ENCODE measurements at regions of chr2 and their contacts with region 1.

Region 1: GRCh38 chr2:61962095-61962984 is 56.9 kb downstream of the COMMD1 start:
- DNase-seq: peak; percentile 80
- ATAC-seq: peak; percentile 97
- H3K4me3 ChIP-seq: no peak overlapping the region
- H3K27ac ChIP-seq: peak overlapping the region; percentile 79; the same call in 1 of the 2 replicates
- H3K4me1 ChIP-seq: peaks cover 3% of the 10 kb centered on the region
- H3K27me3 ChIP-seq: no peaks in the 10 kb centered on the region
- CTCF ChIP-seq: no peak
- POLR2A ChIP-seq: no peak
- RAD21 ChIP-seq: no peak

Region 2: DNA sequence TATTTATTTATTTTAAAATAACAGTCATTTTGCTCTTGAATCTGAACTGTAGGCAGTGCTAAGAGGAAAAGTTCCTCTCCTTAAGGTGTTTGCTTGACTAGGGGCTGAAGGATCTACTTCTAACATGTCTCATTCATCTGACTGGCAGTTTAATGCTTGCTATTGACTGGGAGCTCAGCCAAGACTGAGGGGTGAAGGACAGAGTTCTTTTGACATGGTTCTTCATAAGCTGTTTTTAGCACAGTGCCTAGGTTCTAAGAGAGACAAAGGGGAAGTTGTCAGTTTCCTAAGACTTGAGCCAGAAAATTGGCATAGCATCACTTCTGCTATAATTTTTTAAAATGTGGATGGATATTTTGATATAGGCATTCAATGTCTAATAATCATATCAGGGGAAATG is 16.2 kb after region 1 on chr2:
- CTCF ChIA-PET with region 1: interaction called, 5 read pairs
- POLR2A ChIA-PET with region 1: interaction called, 12 read pairs
- dilution Hi-C with region 1: no loop called
- in situ Hi-C with region 1: no loop called
- intact Hi-C with region 1: no loop called
- DNase-seq: no peak
- ATAC-seq: no peak
- H3K4me3 ChIP-seq: no peak overlapping the region
- H3K27ac ChIP-seq: no peak overlapping the region
- H3K4me1 ChIP-seq: no peaks in the 10 kb centered on the region
- H3K27me3 ChIP-seq: no peaks in the 10 kb centered on the region
- CTCF ChIP-seq: no peak
- POLR2A ChIP-seq: no peak
- RAD21 ChIP-seq: no peak

Region 3: GRCh38 chr2:62178741-62179271 is 216.5 kb after region 1 on chr2:
- CTCF ChIA-PET with region 1: no interaction called
- POLR2A ChIA-PET with region 1: no interaction called
- dilution Hi-C with region 1: no loop called
- in situ Hi-C with region 1: no loop called
- intact Hi-C with region 1: no loop called
- DNase-seq: peak; percentile 24
- ATAC-seq: no peak
- H3K4me3 ChIP-seq: no peak overlapping the region
- H3K27ac ChIP-seq: no peak overlapping the region
- H3K4me1 ChIP-seq: no peaks in the 10 kb centered on the region
- H3K27me3 ChIP-seq: peaks cover 3% of the 10 kb centered on the region
- CTCF ChIP-seq: no peak
- POLR2A ChIP-seq: no peak
- RAD21 ChIP-seq: no peak